ENCODE measurements at regions of chr2 and their contacts with region 1.

Region 1: DNA sequence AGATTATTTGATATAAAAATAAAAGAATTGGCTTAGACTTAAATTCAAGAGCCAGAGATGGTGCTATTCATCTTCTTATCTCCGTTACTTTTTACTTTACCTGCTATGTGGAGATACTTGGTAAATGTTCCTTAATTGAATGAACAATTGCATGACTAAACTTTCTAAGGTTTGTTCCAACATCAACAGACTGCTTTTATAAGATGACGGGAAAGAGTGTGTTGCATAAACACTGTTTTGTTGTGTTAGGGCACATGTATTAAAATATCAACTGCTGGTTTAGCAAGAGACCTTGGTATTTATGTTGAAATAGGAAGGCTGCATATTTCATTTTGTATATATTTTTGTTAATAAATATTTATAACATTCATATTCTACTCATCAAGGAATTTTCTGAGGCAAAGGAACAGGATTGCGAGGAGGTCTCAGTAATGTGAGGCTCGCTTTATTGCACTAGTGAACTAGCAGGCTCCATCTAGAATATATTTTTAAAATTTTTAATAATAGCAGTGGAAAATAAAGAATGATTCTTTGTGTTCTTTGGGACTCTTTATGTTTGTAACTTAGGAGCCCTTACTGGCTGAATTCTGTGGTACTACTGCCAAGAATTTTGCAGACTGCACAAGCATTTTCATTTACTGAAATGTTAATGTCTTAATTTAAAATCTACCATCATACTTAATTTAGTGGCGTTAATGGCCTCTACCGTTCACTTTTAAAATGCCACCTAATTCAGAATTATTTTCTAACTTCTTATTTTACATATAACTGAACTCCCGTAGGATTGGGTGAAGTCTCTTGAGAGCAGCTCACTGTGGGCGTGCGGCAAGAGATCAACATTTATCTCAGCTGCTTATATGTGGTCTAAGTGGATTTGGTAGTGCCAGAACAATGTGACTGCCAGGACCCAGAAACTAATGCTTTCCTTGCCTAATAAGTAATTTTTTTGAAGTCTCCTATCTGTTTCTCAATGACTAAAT is 10.8 kb upstream of the NFE2L2 start:
- DNase-seq: no peak
- ATAC-seq: no peak
- H3K4me3 ChIP-seq: no peak overlapping the region
- H3K4me3 Mint-ChIP-seq: no peak overlapping the region
- H3K27ac ChIP-seq: no peak overlapping the region
- H3K27ac Mint-ChIP-seq: no peak overlapping the region
- H3K4me1 ChIP-seq: no peaks in the 10 kb centered on the region
- H3K4me1 Mint-ChIP-seq: no peaks in the 10 kb centered on the region
- H3K27me3 ChIP-seq: no peaks in the 10 kb centered on the region
- H3K27me3 Mint-ChIP-seq: no peaks in the 10 kb centered on the region
- CTCF ChIP-seq: no peak

Region 2: GRCh38 chr2:177289824-177290628 is 14.7 kb after region 1 on chr2:
- CTCF ChIA-PET with region 1: no interaction called
- POLR2A ChIA-PET with region 1: no interaction called
- intact Hi-C with region 1: loop called in 1 of 2 experiments (anchors 2 kb)
- DNase-seq: peak in 4 of 14 experiments; percentile 24 to 43 (median 34)
- ATAC-seq: peak; percentile 56
- H3K4me3 ChIP-seq: peak overlapping the region; percentile 34
- H3K4me3 Mint-ChIP-seq: peak overlapping the region; percentile 65
- H3K27ac ChIP-seq: peak overlapping the region in 1 of 2 donors; percentile 58
- H3K27ac Mint-ChIP-seq: peak overlapping the region; percentile 92
- H3K4me1 ChIP-seq: peaks cover 15% of the 10 kb centered on the region
- H3K4me1 Mint-ChIP-seq: peaks cover 29% of the 10 kb centered on the region
- H3K27me3 ChIP-seq: no peaks in the 10 kb centered on the region
- H3K27me3 Mint-ChIP-seq: no peaks in the 10 kb centered on the region
- CTCF ChIP-seq: no peak

Measured in CD4-positive, alpha-beta T cell (primary cell).